SK-N-SH (cell line): ENCODE measurements at regions of chr17 and their contacts with region 1.

Region 1: DNA sequence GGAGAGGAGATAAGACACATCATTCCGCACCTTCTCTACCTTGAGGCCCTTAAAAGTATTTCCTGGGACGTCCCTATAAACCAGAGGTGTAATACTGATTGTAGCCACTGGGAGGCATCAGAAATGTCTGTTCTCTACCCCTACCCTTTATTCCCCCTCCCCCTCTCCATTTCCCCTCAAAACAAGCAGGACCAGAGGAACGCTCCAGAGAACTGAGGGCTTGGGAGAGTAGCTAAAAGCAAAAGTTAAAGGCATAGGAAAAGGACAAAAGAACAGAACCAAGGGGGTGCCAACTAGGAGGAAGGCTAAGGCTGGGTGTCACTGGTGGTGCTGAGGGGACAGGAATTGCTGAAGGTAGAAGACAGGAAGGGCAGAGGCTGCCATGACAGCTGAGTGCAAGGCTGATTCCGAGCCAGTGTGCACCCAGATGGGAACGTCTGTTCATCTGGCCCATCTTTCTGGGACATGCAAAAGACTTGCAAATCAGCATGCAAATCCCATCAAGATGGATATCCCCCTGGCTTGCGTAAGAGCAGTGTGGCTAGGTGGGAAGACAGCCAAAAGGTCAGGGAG is 6.7 kb downstream of the CAMTA2 start:
- DNase-seq: peak; percentile 84
- H3K4me3 ChIP-seq: no peak overlapping the region
- H3K27ac ChIP-seq: no peak overlapping the region
- H3K4me1 ChIP-seq: peaks cover 0 to 2% of the 10 kb centered on the region in 2 experiments; a peak in 1 of 4 replicates
- H3K27me3 ChIP-seq: no peaks in the 10 kb centered on the region
- CTCF ChIP-seq: peak; percentile 73
- EP300 ChIP-seq: no peak
- RAD21 ChIP-seq: peak; percentile 69

Region 2: GRCh38 chr17:4948931-4949320 is 31.8 kb before region 1 on chr17:
- CTCF ChIA-PET with region 1: interaction called, 10 read pairs
- POLR2A ChIA-PET with region 1: no interaction called
- DNase-seq: peak; percentile 95
- H3K4me3 ChIP-seq: peak overlapping the region; percentile 79 to 99
- H3K27ac ChIP-seq: peak overlapping the region; percentile 97 to 100
- H3K4me1 ChIP-seq: peaks cover 36 to 46% of the 10 kb centered on the region in 2 experiments
- H3K27me3 ChIP-seq: no peaks in the 10 kb centered on the region
- CTCF ChIP-seq: no peak
- EP300 ChIP-seq: no peak
- RAD21 ChIP-seq: no peak

Region 3: DNA sequence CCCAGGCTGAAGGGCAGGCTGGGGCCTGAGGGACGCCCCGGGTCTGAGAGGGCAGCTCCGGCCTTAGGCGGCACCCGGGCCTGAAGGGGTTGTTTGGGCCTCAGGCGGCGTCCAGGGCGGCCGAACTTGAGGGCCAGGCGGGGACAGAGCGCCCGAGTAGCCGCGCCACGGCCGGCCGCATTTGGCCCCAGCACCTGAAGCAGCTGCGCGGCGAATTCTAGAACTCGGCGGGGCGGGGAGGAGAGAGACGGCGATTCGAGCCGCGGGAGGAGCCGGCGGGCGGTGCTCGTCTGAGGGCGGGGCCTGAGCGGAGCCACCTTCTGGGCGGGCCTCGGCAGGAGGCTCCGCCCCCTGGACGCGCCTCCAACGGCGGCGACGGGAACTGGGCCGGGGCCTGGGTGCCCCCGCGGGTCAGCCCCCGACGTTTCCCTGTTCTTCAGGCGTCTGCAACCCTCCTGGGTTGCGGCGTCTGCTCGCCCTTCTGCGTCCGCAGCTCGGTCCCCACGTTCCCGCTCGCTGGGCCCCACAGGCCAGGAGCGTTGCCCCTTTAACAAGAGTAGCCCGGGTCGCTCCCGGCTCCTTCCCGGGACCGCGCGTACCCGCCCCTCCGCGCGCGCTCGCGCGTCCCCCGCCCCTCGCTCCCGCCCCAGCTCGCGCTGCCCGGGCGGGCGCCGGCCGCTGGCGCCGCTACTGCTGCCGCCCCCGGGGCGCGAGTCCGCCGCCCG is 16.7 kb after region 1 on chr17 and contains the starts of genes INCA1 and KIF1C:
- CTCF ChIA-PET with region 1: interaction called, 14 read pairs
- POLR2A ChIA-PET with region 1: no interaction called
- DNase-seq: peak; percentile 99
- H3K4me3 ChIP-seq: peak within 1 kb of the TSS; percentile 93 to 99
- H3K27ac ChIP-seq: peak within 1 kb of the TSS; percentile 66 to 85; a peak in 3 of 4 replicates
- H3K4me1 ChIP-seq: peaks cover 10 to 24% of the 10 kb centered on the region in 2 experiments; a peak in 3 of 4 replicates
- H3K27me3 ChIP-seq: no peaks in the 10 kb centered on the region
- CTCF ChIP-seq: no peak
- EP300 ChIP-seq: no peak
- RAD21 ChIP-seq: no peak
- polyA plus RNA-seq, gene INCA1: 1.2 and 1.3 TPM in 2 replicates
- polyA plus RNA-seq, gene KIF1C: 36.7 and 58.2 TPM in 2 replicates

Region 4: DNA sequence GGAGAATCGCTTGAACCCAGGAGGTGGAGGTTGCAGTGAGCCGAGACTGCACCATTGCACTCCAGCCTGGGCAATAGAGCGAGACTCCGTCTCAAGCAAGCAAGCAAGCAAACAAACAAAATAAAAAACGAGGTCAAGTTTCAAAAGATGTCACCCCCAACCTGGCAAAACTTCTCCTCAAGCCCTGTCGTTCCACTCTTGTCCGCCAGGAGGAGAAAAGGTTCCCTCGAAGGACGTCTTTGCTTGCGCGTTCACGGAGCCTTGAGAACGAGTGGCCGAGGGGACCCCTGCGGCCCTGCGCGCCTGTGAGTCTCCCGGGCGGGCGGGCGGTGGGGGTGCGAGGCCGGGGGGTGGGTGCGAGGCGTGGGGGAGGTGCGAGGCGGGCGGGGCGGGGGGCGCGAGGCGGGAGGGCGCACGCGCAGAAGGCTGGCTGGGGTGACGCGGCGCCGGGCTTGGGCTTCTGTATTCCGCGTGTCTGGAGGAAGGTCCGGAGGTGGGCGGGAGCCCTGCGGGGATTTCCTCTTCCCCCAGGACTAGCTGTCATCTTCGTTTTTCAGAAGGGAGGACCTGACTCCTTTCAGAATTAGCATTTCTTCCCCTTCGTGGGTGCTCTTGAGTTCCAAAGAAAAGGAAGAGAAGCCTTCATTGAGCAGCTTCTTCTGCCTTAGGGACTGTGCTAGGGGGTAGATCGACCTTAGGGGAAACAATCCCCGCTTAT is 50.8 kb after region 1 on chr17:
- CTCF ChIA-PET with region 1: interaction called, 17 read pairs
- POLR2A ChIA-PET with region 1: interaction called, 3 read pairs
- DNase-seq: peak; percentile 95
- H3K4me3 ChIP-seq: peak overlapping the region; percentile 34 to 55; a peak in 3 of 4 replicates
- H3K27ac ChIP-seq: peak overlapping the region in 1 of 2 experiments; percentile 11; a peak in 1 of 4 replicates
- H3K4me1 ChIP-seq: peaks cover 0 to 2% of the 10 kb centered on the region in 2 experiments; a peak in 1 of 4 replicates
- H3K27me3 ChIP-seq: no peaks in the 10 kb centered on the region
- CTCF ChIP-seq: peak; percentile 66
- EP300 ChIP-seq: no peak
- RAD21 ChIP-seq: peak; percentile 43

Region 5: DNA sequence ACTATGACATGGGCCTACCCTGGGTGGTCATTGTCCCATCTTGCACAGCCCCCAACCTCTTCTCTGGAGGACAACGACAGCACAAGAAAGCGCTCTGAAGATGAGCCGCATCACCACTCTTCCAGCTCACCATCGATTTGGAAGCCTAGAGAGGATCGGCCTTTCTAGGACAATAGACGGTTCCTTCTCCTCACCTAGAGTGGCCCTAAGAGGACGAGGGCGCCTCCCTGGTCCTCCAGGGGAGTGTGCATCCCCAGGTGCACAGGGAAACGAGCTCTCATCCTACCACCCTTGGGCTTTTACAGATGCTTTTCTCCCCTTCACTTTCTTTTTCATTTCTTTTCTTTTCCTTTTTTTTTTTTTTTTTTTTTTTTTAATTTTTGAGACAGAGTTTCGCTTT is 74.8 kb after region 1 on chr17:
- CTCF ChIA-PET with region 1: interaction called, 48 read pairs
- POLR2A ChIA-PET with region 1: interaction called, 3 read pairs
- DNase-seq: peak; percentile 22
- H3K4me3 ChIP-seq: no peak overlapping the region
- H3K27ac ChIP-seq: no peak overlapping the region
- H3K4me1 ChIP-seq: no peaks in the 10 kb centered on the region
- H3K27me3 ChIP-seq: no peaks in the 10 kb centered on the region
- CTCF ChIP-seq: no peak
- EP300 ChIP-seq: no peak
- RAD21 ChIP-seq: no peak